Adrenal gland (tissue), 19 donors: ENCODE measurements at regions of chr11 and their contacts with region 1.

Region 1: GRCh38 chr11:63478896-63479295 is 12.1 kb downstream of the PLAAT5 start:
- DNase-seq: peak; percentile 50 to 74 (median 57)
- H3K4me3 ChIP-seq: no peak overlapping the region
- H3K27ac ChIP-seq: no peak overlapping the region
- H3K4me1 ChIP-seq: no peaks in the 10 kb centered on the region
- H3K27me3 ChIP-seq: no peaks in the 10 kb centered on the region
- CTCF ChIP-seq: peak; percentile 86 to 96 (median 92)
- POLR2A ChIP-seq: no peak

Region 2: GRCh38 chr11:63635762-63636465 is 157.0 kb after region 1 on chr11:
- intact Hi-C with region 1: loop called (anchors 5 kb)
- DNase-seq: peak; percentile 49 to 83 (median 58)
- H3K4me3 ChIP-seq: no peak overlapping the region
- H3K27ac ChIP-seq: no peak overlapping the region
- H3K4me1 ChIP-seq: no peaks in the 10 kb centered on the region
- H3K27me3 ChIP-seq: no peaks in the 10 kb centered on the region
- CTCF ChIP-seq: peak; percentile 36 to 90 (median 80)
- POLR2A ChIP-seq: no peak